ENCODE measurements at regions of chr5 and their contacts with region 1.

Region 1: DNA sequence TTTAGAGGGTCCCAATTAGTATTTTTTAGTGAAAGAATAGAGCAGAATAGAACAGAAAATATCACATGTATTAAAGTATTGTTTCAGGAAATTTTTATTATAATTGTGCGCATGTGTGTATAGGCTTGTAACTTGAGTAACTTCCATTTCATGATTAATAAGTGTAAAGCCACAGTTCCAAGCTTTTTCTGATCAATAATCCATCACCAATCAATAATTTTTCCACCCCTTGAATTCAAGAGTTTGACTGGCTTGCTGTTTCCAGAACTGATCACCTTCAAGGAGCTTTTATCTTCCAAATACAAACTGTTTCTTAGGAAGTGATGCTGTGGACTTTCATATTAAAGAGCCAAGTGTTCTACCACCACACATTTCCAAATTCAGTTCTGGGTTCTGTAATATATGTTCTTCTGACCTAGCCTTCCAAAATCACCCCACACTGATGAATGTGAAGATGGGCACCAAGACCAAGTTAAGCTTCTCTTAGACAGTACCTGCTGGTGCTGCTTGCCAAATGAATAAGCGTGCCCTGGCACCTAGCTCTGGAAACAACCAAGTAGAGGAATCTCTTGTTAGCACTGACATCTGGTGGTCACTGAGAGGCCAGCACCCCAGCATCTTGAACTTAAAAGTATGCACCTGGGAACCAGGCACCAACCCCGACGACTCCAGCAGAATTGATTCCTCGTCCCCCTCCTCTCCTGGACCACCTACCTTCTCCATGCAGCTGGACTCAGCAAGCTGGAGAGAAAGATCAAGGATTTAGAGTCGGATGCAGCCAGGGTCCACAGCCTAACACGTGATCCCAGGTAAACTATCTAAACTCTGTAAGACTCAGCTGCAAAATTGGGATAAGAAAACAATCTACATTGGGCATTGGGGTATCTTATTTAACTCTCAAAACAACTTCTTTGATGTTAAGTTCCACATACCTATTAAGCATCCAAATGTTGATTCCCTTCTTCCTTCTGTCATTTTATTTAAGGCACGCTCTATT is 89.6 kb downstream of the SLC1A3 start:
- H3K4me3 ChIP-seq: no peak overlapping the region
- H3K27ac ChIP-seq: no peak overlapping the region
- H3K4me1 ChIP-seq: no peaks in the 10 kb centered on the region
- CTCF ChIP-seq: peak; percentile 68

Region 2: GRCh38 chr5:36264202-36264760 is 431.7 kb before region 1 on chr5:
- CTCF ChIA-PET with region 1: interaction called, 13 read pairs
- POLR2A ChIA-PET with region 1: no interaction called
- H3K4me3 ChIP-seq: no peak overlapping the region
- H3K27ac ChIP-seq: no peak overlapping the region
- H3K4me1 ChIP-seq: no peaks in the 10 kb centered on the region
- CTCF ChIP-seq: no peak

Region 3: GRCh38 chr5:36298516-36298915 is 397.5 kb before region 1 on chr5:
- CTCF ChIA-PET with region 1: interaction called, 11 read pairs
- POLR2A ChIA-PET with region 1: no interaction called
- H3K4me3 ChIP-seq: no peak overlapping the region
- H3K27ac ChIP-seq: no peak overlapping the region
- H3K4me1 ChIP-seq: peaks cover 25% of the 10 kb centered on the region
- CTCF ChIP-seq: no peak

Region 4: DNA sequence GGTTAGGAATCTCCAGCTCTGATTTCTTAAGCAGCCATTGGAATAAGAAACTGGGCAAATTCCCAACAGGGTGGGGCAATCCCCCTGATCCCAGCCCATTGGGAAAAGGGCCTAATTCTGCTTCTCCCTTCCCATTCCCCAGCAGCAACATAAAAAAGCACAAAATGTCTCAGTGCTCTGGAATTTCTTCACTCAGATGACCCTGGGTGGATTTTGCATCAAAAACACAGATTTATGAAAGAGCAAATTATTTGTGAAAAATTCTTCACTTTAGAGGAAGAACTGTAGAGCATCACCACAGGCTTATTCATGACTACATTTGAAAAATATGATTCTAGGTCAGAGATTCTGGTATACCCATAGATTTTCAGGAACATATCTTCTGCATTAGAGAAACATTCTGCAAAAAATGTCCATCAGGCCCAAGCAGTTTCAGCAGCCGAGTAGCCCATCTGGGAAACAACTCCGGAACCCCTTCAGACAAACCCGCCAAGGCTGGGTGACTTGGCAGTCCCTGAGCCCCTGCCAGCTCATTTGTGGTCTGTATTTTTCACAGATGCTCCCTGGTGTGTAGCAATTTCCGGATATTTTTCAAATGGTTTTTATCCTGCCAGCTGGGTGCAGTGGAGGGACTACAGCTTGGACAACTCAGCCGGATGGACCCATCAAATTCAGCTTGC is 292.2 kb before region 1 on chr5:
- CTCF ChIA-PET with region 1: interaction called, 20 read pairs
- POLR2A ChIA-PET with region 1: no interaction called
- H3K4me3 ChIP-seq: no peak overlapping the region
- H3K27ac ChIP-seq: no peak overlapping the region
- H3K4me1 ChIP-seq: no peaks in the 10 kb centered on the region
- CTCF ChIP-seq: no peak